ENCODE measurements at regions of chr13 and their contacts with region 1.

Region 1: GRCh38 chr13:20160847-20161274 is at the start of gene GJA3:
- DNase-seq: no peak
- total RNA-seq, gene GJA3: 25.9 TPM

Region 2: DNA sequence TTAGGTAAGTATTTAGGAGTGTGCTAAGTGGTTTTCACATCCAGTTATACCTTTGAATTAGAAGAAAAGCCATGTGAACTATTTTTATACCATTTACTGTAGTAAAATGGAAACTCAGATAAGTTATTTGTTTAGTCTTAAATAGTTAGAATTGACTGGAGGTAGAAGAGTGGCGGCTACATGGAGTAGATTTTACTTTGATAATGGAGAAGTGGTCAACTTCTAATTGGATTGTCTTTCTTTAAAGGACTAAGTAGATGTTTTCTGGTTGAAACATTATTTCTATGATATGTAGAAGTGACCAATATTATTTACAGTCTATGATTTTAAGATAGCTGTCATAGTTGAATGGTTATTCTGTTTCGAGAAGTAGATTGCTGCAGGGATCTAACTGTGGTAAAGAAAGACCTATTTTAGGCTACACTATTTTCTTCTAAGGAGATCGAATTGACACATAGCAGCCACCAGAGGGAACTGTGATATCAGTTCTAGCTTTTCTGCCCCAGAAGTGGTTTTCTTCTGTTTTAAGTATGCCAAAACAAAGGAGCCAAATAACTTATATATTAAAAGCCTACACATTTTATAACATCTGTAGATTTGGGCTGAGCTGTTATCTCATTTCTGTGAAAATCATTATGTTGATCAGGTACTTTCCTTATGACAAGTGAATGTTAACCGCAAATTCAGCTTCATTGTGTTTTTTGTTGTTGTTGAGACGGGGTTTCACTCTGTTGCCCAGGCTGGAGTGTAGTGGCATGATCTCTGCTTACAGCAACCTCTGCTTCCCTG is 176.2 kb before region 1 on chr13:
- intact Hi-C with region 1: loop called (anchors 10 kb)
- DNase-seq: no peak

Region 3: DNA sequence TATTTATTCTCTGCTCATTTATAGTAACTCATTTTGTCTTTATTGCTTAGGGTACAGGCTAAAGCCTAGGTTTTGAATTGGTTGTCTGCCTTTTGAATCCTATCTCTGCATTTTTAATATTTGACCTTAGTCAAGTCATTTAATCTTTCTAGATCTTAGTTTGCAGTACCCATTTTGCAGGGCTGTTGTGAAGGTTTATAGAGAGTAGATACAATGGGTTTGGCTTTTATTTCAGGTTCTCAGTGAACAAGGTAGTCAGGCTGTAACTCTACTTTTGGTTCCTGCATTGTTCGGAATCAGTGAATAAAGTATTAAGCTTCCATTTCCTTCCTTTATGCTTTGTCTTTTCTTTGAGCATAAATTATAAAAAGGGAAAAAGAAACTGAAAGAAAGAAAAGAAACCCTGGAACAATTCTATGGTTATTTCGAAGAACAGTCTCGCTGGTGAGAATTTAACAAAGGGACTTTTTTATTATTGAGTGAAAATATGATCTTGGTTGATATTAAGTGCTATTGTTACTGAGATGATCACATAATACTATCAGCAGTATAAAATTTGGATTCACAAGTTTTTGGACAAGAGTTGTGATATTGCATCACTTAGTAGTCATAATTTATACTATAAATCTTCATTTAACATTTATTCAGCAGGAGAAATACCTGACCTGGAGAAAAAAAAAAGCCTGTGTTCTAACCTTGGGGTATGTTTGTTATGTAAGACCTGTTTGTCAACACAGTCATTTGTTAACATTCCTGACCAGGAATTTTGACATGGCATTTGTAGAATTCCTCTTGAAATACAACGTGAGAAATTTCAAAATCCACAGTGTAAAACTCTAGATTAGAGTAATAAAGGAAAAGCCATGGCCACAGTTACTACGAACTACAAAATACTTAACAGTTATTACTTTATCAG is 111.0 kb before region 1 on chr13:
- intact Hi-C with region 1: loop called (anchors 10 kb)
- DNase-seq: no peak

Region 4: DNA sequence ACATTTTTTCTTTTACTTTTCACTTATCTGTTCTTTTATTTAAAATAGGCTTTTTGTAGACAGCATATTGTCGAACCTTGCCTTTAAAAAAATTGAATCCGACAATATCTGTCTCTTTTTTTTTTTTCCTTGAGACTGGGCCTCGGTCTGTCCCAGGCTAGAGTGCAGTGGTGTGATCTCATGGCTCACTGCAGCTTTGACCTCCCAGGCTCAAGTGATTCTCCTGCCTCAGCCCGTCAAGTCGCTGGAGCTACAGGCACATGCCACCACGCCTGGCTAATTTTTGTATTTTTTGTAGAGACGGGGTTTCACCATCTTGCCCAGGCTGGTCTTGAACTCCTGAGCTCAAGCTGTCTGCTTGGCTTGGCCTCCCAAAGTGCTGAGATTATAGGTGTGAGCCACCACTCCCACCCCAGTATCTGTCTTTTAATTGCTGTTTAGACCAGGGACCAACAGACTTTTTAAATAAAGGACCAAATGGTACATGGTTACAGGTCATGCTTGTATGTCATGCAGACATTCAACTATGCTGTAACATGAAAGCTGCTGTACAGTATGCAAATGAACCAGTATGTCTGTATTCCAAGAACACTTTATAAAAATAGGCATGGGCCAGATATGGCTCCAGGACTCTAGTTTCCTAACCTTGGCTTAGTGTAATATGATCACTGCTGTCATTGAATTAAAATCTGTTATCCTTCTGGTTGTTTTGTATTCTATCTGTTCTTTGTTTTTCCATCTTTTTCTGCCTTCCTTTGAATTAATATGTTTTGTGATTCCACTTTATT is 80.3 kb before region 1 on chr13:
- intact Hi-C with region 1: loop called (anchors 5 kb)
- DNase-seq: no peak

Region 5: GRCh38 chr13:20127577-20128466 is 33.0 kb before region 1 on chr13:
- intact Hi-C with region 1: loop called (anchors 1 kb)
- DNase-seq: peak; percentile 82

Region 6: GRCh38 chr13:20141238-20142022 is 19.4 kb before region 1 on chr13:
- intact Hi-C with region 1: loop called (anchors 2 kb)
- DNase-seq: no peak